Cardiac septum (tissue), 1 donor: ENCODE measurements at regions of chr1 and their contacts with region 1.

Region 1: GRCh38 chr1:209747580-209748262 is 8.1 kb upstream of the TRAF3IP3 start:
- DNase-seq: peak; percentile 98

Region 2: DNA sequence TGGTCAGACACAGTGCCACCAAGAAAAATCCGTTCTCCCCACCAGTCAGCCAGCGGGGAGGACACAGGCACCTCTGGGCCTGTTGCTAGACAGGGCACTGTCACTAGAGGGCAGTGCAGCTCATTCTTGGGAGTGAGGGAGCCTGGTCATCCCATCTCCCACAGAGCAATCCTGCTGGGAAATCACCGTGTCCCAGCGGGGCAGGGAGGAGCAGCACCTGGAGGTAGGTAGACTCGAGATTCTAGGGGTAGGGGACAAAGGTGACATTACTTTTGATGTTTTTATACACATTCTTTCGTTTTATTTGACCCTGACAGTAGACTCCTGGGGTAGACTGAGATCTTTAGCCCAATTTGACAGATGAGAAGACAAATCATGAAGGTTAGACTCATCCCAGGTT is 170.9 kb before region 1 on chr1:
- intact Hi-C with region 1: loop called (anchors 2 kb)
- DNase-seq: peak; percentile 91

Region 3: GRCh38 chr1:209627732-209628196 is 120.0 kb before region 1 on chr1:
- intact Hi-C with region 1: loop called (anchors 5 kb)
- DNase-seq: peak; percentile 91

Region 4: GRCh38 chr1:209692745-209693504 is 54.8 kb before region 1 on chr1:
- intact Hi-C with region 1: loop called (anchors 1 kb)
- DNase-seq: peak; percentile 83

Region 5: GRCh38 chr1:209728466-209728865 is 19.3 kb before region 1 on chr1:
- intact Hi-C with region 1: loop called (anchors 2 kb)
- DNase-seq: no peak

Region 6: GRCh38 chr1:209769171-209769904 is 21.6 kb after region 1 on chr1:
- intact Hi-C with region 1: no loop called
- DNase-seq: peak; percentile 90